CD4-positive, alpha-beta T cell (primary cell): ENCODE measurements at regions of chr22 and their contacts with region 1.

Region 1: DNA sequence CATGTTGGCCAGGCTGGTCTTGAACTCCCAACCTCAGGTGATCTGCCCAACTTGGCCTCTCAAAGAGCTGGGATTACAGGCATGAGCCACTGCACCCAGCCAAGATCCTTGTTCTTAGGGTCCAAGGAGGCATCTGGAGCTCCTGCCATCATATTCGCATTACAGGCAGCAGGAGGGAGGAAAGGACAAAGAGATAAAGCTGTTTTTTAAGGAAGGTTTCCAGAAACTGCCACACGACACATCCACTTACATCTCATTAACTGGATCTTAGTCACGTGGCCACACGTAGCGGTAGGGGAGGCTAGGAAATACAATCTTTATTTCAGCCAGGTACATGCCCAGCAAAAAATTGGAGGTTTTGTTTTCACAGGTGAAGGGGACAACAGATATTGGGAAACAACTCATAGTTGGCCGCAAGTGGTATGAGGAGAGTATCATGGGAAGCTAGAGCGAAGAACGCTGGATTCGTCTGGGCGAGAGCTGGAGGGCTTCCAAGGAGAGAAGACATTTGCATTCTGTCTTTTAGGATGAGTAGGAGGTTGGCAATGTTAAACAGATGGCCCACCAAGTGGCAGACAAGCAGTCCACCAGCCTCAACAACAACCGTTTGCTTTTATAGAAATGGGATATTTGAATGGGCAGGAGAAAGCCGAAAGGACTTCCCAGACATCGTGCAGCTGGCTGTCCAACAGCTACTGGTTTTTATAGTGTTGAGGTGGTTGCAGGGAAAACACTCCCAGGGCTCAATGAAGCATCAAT is 39.2 kb upstream of the DMC1 start:
- DNase-seq: no peak
- ATAC-seq: no peak
- H3K4me3 ChIP-seq: no peak overlapping the region
- H3K4me3 Mint-ChIP-seq: no peak overlapping the region
- H3K27ac ChIP-seq: no peak overlapping the region
- H3K27ac Mint-ChIP-seq: no peak overlapping the region
- H3K4me1 ChIP-seq: no peaks in the 10 kb centered on the region
- H3K4me1 Mint-ChIP-seq: no peaks in the 10 kb centered on the region
- H3K27me3 ChIP-seq: no peaks in the 10 kb centered on the region
- H3K27me3 Mint-ChIP-seq: no peaks in the 10 kb centered on the region
- CTCF ChIP-seq: no peak

Region 2: GRCh38 chr22:38506118-38506962 is 102.8 kb before region 1 on chr22 and contains the start of gene DDX17:
- CTCF ChIA-PET with region 1: no interaction called
- POLR2A ChIA-PET with region 1: no interaction called
- intact Hi-C with region 1: no loop called
- DNase-seq: peak; percentile 90 to 98 (median 94)
- ATAC-seq: peak; percentile 88
- H3K4me3 ChIP-seq: peak within 1 kb of the TSS; percentile 69
- H3K4me3 Mint-ChIP-seq: peak within 1 kb of the TSS; percentile 100
- H3K27ac ChIP-seq: peak within 1 kb of the TSS; percentile 98 to 100
- H3K27ac Mint-ChIP-seq: peak within 1 kb of the TSS; percentile 99
- H3K4me1 ChIP-seq: peaks cover 25% of the 10 kb centered on the region
- H3K4me1 Mint-ChIP-seq: peaks cover 57% of the 10 kb centered on the region
- H3K27me3 ChIP-seq: no peaks in the 10 kb centered on the region
- H3K27me3 Mint-ChIP-seq: no peaks in the 10 kb centered on the region
- CTCF ChIP-seq: no peak
- total RNA-seq, gene DDX17: 454 to 462 TPM

Region 3: DNA sequence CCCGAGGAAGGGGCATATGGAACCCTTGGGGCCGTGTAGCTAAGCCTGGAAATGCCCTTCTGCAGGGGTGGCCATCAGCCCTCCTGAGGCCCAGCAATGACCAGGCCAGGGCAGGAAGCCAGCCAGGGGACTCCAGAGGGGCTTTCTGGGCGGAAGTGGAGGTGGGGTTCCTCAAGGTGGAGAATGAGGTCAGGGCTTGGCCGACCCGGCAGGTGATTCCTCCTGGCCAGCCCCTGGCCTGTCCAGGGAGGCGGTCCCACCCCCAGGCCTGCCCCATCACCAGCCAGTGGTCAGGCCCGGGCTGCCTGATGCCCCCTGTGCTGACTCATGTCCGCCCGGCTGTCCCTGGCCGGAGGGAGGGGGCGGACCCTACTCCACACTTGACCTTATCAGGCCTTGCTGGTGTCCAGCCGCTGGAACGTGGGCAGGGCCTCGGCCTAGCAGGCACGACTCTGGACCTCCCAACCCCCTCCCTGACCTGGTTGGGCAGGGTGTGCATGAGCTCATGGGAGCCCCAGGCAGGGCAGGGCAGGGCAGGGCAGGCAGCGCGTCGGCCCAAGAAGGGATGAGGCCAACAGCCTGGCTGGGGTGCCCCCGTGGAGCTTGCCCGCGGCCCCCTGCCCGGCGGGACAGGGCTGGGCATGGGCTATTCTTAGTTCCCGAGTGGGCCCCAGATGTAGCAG is 674.3 kb after region 1 on chr22:
- CTCF ChIA-PET with region 1: no interaction called
- POLR2A ChIA-PET with region 1: no interaction called
- intact Hi-C with region 1: loop called in 1 of 2 experiments (anchors 10 kb)
- DNase-seq: no peak
- ATAC-seq: no peak
- H3K4me3 ChIP-seq: no peak overlapping the region
- H3K4me3 Mint-ChIP-seq: no peak overlapping the region
- H3K27ac ChIP-seq: no peak overlapping the region
- H3K27ac Mint-ChIP-seq: no peak overlapping the region
- H3K4me1 ChIP-seq: peaks cover 8% of the 10 kb centered on the region
- H3K4me1 Mint-ChIP-seq: peaks cover 8% of the 10 kb centered on the region
- H3K27me3 ChIP-seq: no peaks in the 10 kb centered on the region
- H3K27me3 Mint-ChIP-seq: peaks cover 5% of the 10 kb centered on the region
- CTCF ChIP-seq: no peak